GM10248 (cell line): ENCODE measurements at regions of chr5 and their contacts with region 1.

Region 1: DNA sequence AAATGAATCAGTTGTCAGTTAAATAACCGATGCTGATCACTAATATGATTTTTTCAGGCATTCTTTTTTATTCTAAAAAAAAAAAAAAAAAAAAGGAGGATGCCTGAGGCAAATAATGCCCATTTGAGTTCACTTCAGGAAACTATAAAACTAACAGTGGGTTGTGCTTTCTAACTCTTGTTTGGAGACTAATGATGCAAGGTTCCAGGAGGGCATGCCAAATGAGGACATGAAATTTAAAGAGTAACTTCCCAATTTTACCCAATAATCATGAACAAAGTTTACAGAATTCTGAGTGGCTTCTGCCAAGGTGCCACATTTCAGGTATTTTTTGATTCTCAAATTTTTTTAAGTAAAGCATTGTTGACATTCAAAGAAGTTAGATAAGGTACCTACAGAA is 41.0 kb downstream of the CEP120 start:
- DNase-seq: no peak
- CTCF ChIP-seq: no peak

Region 2: GRCh38 chr5:123371575-123372179 is 10.6 kb before region 1 on chr5:
- CTCF ChIA-PET with region 1: interaction called, 12 read pairs
- POLR2A ChIA-PET with region 1: no interaction called
- DNase-seq: no peak
- CTCF ChIP-seq: peak; percentile 31

Region 3: DNA sequence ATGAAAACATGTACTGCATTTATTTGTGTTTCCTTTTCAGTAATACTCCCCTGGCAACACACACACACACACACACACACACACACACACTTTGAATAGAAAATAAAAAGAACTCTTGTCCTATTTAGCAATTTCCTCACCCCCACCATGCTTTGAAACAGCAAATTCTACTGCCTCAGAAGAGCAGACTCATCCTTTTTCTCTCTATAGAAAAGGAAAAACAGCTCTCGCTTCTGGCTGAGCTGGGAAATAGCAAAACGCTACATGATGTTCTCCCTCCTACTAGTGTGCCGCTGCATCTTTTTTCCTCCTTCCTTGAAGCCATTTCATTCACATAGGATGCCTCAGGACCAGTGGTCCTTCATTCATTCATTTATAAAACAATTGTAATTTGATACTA is 583.4 kb after region 1 on chr5:
- CTCF ChIA-PET with region 1: no interaction called
- POLR2A ChIA-PET with region 1: no interaction called
- DNase-seq: no peak
- CTCF ChIP-seq: no peak